ENCODE measurements at regions of chr2 and their contacts with region 1.

Region 1: DNA sequence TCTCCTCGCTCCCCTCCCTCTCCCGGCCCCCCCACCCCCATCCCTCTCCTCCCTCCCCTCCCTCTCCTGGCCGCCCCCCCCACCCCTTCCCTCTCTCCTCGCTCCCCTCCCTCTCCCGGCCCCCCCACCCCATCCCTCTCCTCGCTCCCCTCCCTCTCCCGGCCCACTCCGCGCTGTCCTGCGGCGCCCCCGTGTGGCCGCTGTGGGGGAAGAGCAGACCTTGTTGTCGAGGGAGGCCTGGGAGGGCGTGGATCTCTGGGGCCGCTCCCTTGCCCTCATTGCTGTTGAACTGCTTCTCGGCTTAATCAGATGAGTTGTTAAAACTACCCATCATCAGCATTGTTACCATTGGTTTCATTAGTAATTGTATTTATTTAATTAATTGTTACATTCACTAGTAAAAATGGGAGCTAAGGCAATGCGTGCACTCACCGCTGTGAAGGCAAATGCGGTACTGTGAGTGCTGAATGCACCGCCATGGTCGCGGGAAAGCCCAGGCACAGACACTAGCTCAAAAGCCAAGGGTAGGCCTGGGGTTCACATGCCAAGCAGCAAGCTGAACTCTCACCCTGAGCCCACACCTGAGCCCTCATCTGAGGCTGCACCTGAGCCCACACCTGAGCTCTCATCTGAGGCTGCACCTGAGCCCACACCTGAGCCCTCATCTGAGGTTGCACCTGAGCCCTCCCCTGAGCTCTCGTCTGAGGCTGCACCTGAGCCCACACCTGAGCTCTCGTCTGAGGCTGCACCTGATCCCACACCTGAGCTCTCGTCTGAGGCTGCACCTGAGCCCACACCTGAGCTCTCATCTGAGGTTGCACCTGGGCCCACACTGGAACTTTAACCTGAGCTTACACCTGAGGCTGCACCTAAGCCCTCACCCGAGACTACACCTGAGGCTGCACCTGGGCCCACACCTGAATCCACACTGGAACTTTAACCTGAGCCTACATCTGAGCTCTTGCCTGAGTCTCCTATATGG is 8.8 kb downstream of the RTP5 start:
- DNase-seq: no peak
- ATAC-seq: peak; percentile 29
- H3K4me3 ChIP-seq: no peak overlapping the region
- H3K27ac ChIP-seq: no peak overlapping the region
- H3K4me1 ChIP-seq: peaks cover 6% of the 10 kb centered on the region
- H3K27me3 ChIP-seq: no peaks in the 10 kb centered on the region
- CTCF ChIP-seq: peak; percentile 68 to 86 (median 74)
- EP300 ChIP-seq: no peak
- POLR2A ChIP-seq: no peak
- RAD21 ChIP-seq: peak; percentile 94

Region 2: DNA sequence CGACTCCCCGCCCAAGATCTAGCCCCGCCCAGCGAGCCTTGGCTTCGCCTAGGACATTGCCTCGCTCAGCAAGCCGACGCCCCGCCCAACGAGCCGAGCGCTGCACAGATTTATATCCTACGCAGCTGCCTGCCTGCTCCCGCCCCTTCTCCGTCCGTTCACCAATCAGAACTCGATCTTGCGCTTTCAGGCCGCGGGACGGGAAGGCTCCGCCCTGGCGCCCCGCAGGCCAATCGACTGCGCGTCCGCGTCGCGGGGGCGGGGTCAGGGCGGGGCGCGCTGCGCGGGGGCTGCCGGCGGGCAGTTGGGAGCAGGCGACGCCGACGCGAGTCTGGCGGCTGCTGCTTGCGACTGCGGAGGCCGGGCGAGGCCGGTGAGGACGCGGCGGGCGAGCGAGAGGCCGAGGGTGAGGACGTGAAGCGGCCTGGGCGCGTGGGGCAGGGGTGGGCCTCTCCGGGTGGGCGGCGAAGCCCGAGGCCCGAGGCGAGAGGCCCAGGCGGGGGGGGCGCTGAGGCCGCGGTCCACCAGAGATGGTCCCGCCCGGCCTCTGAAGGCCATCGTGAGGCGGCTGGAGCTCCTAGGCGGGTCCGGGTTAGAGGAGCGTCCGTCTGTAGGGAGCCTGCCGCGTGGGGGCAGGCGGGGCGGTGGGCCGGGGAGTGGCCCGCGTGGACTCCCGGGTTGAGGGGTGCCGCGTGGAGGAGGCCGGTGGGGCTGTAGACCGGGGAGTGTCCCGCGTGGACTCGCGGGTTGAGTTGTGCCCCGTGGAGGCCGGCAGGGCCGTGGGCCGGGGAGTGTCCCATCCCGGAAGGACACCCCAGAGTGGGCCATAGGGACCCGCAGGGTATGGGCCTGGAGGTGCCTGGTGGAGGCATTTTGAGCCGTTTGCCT is 522.1 kb before region 1 on chr2 and contains the start of gene FARP2:
- CTCF ChIA-PET with region 1: interaction called, 4 read pairs
- POLR2A ChIA-PET with region 1: no interaction called
- RAD21 ChIA-PET with region 1: interaction called, 3 read pairs
- SMC1A ChIA-PET with region 1: no interaction called
- in situ Hi-C with region 1: loop called (anchors 5 kb)
- intact Hi-C with region 1: loop called (anchors 5 kb)
- DNase-seq: peak; percentile 90
- ATAC-seq: peak; percentile 86
- H3K4me3 ChIP-seq: peak within 1 kb of the TSS; percentile 91
- H3K27ac ChIP-seq: peak within 1 kb of the TSS; percentile 64
- H3K4me1 ChIP-seq: peaks cover 10% of the 10 kb centered on the region
- H3K27me3 ChIP-seq: no peaks in the 10 kb centered on the region
- CTCF ChIP-seq: no peak
- EP300 ChIP-seq: no peak
- POLR2A ChIP-seq: peak; percentile 97
- RAD21 ChIP-seq: 0 out of 2 replicates have a peak, but pooled peaks have one; percentile 10
- polyA plus RNA-seq, gene FARP2: 5.5 to 5.6 TPM

Region 3: GRCh38 chr2:241514986-241515737 is 363.1 kb before region 1 on chr2:
- CTCF ChIA-PET with region 1: no interaction called
- POLR2A ChIA-PET with region 1: no interaction called
- RAD21 ChIA-PET with region 1: no interaction called
- SMC1A ChIA-PET with region 1: no interaction called
- in situ Hi-C with region 1: loop called (anchors 10 kb)
- intact Hi-C with region 1: no loop called
- DNase-seq: peak; percentile 60
- ATAC-seq: peak; percentile 88
- H3K4me3 ChIP-seq: no peak overlapping the region
- H3K27ac ChIP-seq: peak overlapping the region; percentile 65
- H3K4me1 ChIP-seq: peaks cover 16% of the 10 kb centered on the region
- H3K27me3 ChIP-seq: no peaks in the 10 kb centered on the region
- CTCF ChIP-seq: no peak
- EP300 ChIP-seq: no peak
- POLR2A ChIP-seq: no peak
- RAD21 ChIP-seq: no peak

Region 4: DNA sequence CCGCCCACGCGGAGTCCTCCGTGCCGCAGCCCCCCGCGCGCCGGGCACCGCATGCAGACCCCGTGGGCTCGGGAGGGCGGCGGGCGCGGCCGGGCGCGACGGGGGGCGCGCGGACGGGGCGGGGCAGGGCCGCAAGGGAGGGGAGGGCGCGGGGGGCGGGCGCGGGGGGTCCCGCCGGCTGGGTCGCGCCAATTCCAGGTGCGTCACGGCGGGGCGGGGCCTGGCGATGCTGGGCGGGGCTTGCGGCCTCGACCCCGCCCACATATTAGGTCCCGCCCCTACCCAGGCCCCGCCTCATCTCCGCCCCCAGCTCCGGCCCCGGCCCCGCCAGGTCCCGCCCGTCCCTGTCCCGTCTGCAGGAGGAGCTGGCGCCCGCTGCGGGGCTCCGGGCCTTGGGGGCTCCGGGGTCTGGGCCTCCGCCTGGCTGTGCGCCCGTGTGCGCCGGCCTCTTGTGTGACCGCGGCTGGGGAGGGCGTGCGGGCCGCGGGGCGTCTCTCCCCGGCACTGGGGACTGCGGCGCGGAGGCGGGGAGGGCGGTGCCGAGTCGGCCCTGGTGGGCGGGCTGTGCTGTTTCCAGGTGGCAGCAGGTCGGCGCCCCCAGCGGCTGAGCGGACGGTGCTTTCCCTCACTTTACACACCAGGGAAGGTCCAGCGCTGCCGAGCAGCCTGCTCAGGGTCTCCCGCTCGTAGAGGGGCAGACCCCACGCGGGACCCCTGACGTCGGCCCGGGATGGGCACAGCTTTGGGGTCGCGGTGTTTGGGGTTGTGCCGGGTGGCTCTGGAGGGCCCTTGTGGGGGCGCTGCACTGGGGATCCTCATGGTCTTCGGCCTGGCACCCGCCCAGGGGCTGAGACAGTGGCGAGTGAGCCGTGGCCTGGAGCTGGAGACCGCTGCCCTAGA is 175.9 kb before region 1 on chr2:
- CTCF ChIA-PET with region 1: interaction called, 18 read pairs
- POLR2A ChIA-PET with region 1: interaction called, 9 read pairs
- RAD21 ChIA-PET with region 1: interaction called, 3 read pairs
- SMC1A ChIA-PET with region 1: interaction called, 4 read pairs
- in situ Hi-C with region 1: loop called (anchors 5 kb)
- intact Hi-C with region 1: loop called (anchors 1 kb)
- DNase-seq: peak; percentile 37
- ATAC-seq: peak; percentile 87
- H3K4me3 ChIP-seq: peak overlapping the region; percentile 95
- H3K27ac ChIP-seq: peak overlapping the region; percentile 89
- H3K4me1 ChIP-seq: 0 out of 2 replicates have a peak, but pooled peaks cover 6% of the 10 kb centered on the region
- H3K27me3 ChIP-seq: no peaks in the 10 kb centered on the region
- CTCF ChIP-seq: peak; percentile 42 to 60 (median 49)
- EP300 ChIP-seq: no peak
- POLR2A ChIP-seq: peak; percentile 75
- RAD21 ChIP-seq: no peak

Region 5: GRCh38 chr2:241771286-241772062 is 106.8 kb before region 1 on chr2:
- CTCF ChIA-PET with region 1: interaction called, 5 read pairs
- POLR2A ChIA-PET with region 1: no interaction called
- RAD21 ChIA-PET with region 1: no interaction called
- SMC1A ChIA-PET with region 1: no interaction called
- in situ Hi-C with region 1: no loop called
- intact Hi-C with region 1: loop called (anchors 1 kb)
- DNase-seq: no peak
- ATAC-seq: peak; percentile 61
- H3K4me3 ChIP-seq: 0 out of 2 replicates have a peak overlapping the region, but pooled peaks have one; percentile 23
- H3K27ac ChIP-seq: peak overlapping the region; percentile 89
- H3K4me1 ChIP-seq: peaks cover 15% of the 10 kb centered on the region
- H3K27me3 ChIP-seq: no peaks in the 10 kb centered on the region
- CTCF ChIP-seq: no peak
- EP300 ChIP-seq: no peak
- POLR2A ChIP-seq: 0 out of 2 replicates have a peak, but pooled peaks have one; percentile 13
- RAD21 ChIP-seq: no peak

Region 6: DNA sequence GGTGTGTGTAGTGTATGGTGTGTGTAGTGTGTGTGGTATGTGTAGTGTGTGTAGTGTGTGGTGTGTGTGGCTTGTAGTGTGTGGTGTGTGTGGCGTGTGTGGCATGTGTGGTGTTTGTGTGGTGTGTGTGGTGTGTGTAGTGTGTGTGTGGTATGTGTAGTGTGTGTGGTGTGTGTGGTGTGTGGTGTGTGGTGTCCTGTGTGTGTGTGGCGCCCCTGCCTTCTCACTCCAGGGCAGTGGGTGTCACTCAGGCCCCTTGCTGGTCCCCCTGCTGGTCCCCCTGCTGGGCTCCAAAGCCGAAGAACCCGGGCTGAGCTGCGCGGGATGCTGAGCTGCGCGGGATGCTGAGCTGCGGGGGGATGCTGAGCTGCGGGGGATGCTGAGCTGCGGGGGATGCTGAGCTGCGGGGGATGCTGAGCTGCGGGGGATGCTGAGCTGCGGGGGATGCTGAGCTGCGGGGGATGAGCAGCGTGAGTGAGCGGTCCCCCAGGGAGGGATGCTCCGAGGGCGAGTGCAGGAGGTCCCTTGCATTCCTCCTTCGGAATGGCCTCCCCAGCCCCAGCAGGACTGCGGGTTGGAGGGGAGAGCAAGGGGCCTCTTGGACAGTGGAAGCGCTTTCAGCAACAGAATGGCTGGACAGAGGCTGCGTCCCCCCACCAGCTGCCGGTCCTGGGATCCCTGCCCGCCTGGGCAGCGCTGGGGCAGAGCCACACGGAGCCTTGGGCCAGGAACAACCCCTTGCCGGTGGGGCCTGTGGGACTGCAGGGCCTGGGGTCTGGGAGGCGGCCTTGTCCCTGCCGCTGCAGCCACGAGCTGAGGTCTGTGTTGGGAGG is 12.1 kb before region 1 on chr2:
- CTCF ChIA-PET with region 1: interaction called, 21 read pairs
- POLR2A ChIA-PET with region 1: interaction called, 3 read pairs
- RAD21 ChIA-PET with region 1: interaction called, 5 read pairs
- SMC1A ChIA-PET with region 1: interaction called, 5 read pairs
- in situ Hi-C with region 1: no loop called
- intact Hi-C with region 1: no loop called
- DNase-seq: no peak
- ATAC-seq: peak; percentile 33; the same call in 2 of the 3 replicates
- H3K4me3 ChIP-seq: no peak overlapping the region
- H3K27ac ChIP-seq: no peak overlapping the region
- H3K4me1 ChIP-seq: peaks cover 20% of the 10 kb centered on the region
- H3K27me3 ChIP-seq: no peaks in the 10 kb centered on the region; a peak in 1 of 4 replicates
- CTCF ChIP-seq: no peak
- EP300 ChIP-seq: no peak
- POLR2A ChIP-seq: no peak
- RAD21 ChIP-seq: no peak